Activated T-helper 1 cell treated with anti-CD3 and anti-CD28 coated beads, Interleukin-12 subunit alpha, Interleukin-12 subunit beta, Interleukin-2, Interleukin-4 antibody, amounts not matched to agents 30 ng/mL and 10 ng/mL and 1 ng/mL, durations not matched to agents 14 hours and 24 hours and 36 hours (primary cell): ENCODE measurements at regions of chr1 and their contacts with region 1.

Region 1: GRCh38 chr1:9004700-9005394 is 21.4 kb downstream of the SLC2A7 start:
- DNase-seq: peak; percentile 78
- H3K4me3 Mint-ChIP-seq: no peak overlapping the region
- H3K27ac Mint-ChIP-seq: no peak overlapping the region
- H3K4me1 Mint-ChIP-seq: peaks cover 6% of the 10 kb centered on the region
- H3K27me3 Mint-ChIP-seq: peaks cover 5% of the 10 kb centered on the region

Region 2: DNA sequence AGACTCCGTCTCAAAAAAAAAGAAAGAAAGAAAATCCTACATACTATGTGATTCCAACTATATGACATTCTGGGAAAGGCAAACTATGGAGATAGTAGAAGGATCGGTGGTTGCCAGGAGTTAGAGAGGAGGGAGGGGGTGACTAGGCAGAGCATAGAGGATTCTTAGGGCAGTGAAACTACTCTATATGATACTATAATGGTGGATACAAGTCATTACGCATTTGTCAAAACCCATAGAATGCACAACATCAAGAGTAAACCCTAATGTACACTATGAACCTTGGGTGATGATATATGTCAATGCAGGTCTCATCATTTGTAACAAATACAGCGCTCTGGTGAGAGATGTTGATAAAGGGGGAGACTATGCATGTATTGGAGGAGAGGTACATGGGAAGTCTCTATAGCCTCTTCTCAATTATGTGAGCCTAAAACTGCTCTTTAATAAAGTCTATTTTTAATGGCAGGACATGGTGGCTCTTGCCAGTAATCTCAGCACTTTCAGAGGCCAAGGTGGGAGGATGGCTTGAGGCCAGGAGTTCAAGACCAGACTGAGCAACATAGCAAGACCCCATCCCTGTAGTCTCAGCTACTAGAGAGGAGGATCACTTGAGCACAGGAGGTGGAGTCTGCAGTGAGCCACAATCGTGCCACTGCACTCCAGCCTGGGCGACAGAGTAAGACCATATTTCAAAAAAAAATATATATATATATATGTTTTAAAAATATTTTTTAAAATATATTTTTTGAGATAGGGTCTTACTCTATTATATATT is 47.6 kb after region 1 on chr1:
- intact Hi-C with region 1: no loop called
- DNase-seq: no peak
- H3K4me3 Mint-ChIP-seq: no peak overlapping the region
- H3K27ac Mint-ChIP-seq: no peak overlapping the region
- H3K4me1 Mint-ChIP-seq: no peaks in the 10 kb centered on the region
- H3K27me3 Mint-ChIP-seq: peaks cover 10% of the 10 kb centered on the region

Region 3: GRCh38 chr1:9078015-9078750 is 73.3 kb after region 1 on chr1:
- intact Hi-C with region 1: no loop called
- DNase-seq: no peak
- H3K4me3 Mint-ChIP-seq: no peak overlapping the region
- H3K27ac Mint-ChIP-seq: no peak overlapping the region
- H3K4me1 Mint-ChIP-seq: peaks cover 57% of the 10 kb centered on the region
- H3K27me3 Mint-ChIP-seq: peaks cover 17% of the 10 kb centered on the region

Region 4: GRCh38 chr1:9101510-9102146 is 96.8 kb after region 1 on chr1:
- intact Hi-C with region 1: loop called (anchors 1 kb)
- DNase-seq: peak; percentile 18
- H3K4me3 Mint-ChIP-seq: no peak overlapping the region
- H3K27ac Mint-ChIP-seq: no peak overlapping the region
- H3K4me1 Mint-ChIP-seq: no peaks in the 10 kb centered on the region
- H3K27me3 Mint-ChIP-seq: peaks cover 4% of the 10 kb centered on the region